Activated CD4-positive, alpha-beta T cell treated with anti-CD3 and anti-CD28 coated beads, Interleukin-2, amount 10 ng/mL, durations not matched to agents 24 days and 14 days (primary cell): ENCODE measurements at regions of chr3 and their contacts with region 1.

Region 1: DNA sequence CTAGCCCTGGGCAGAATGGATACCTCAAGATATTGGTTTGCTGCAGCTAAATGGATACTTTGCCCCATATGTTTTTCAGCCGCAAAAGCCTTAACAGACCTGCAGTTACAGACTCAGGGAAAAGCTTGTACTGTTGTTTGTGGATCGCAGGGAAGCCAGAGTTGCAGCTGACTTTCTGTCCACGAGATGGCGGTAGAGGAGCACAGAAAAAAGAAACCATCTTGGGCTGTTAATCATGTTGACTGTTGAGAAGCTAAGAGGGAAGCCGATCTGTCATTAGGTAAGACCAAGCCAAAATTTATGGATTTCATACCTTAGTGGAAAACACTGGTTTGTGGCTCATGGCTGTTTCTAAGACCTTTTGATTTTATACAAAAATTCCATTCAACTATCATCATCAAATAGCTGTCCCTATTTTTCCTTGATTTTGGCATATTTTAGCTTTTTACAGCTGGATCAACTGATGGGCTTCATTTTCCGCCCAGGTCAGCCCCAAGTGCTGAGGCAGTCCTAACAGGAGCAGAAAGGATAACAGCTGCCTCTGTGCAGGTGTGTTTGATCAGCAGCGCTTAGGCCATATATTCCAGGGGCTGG is 205.7 kb upstream of the ZPLD1 start:
- DNase-seq: peak; percentile 93
- H3K4me3 Mint-ChIP-seq: no peak overlapping the region
- H3K27ac Mint-ChIP-seq: no peak overlapping the region
- H3K4me1 Mint-ChIP-seq: peaks cover 10% of the 10 kb centered on the region
- H3K27me3 Mint-ChIP-seq: peaks cover 24% of the 10 kb centered on the region

Region 2: DNA sequence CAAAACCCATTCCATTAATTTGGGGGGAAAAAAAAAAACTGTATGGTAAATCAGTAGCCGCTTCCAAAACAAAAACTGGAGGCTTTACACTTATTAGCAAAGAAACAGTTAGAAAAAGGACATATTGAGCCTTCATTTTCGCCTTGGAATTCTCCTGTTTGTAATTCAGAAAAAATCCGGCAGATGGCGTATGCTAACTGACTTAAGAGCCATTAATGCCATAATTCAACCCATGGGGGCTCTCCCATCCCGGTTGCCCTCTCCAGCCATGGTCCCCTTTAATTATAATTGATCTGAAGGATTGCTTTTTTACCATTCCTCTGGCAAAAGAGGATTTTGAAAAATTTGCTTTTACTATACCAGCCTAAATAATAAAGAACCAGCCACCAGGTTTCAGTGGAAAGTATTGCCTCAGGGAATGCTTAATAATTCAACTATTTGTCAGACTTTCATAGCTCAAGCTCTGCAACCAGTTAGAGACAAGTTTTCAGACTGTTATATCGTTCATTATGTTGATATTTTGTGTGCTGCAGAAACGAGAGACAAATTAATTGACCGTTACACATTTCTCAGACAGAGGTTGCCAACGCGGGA is 533.3 kb before region 1 on chr3:
- intact Hi-C with region 1: loop called (anchors 5 kb)
- DNase-seq: peak; percentile 79
- H3K4me3 Mint-ChIP-seq: no peak overlapping the region
- H3K27ac Mint-ChIP-seq: no peak overlapping the region
- H3K4me1 Mint-ChIP-seq: peaks cover 3% of the 10 kb centered on the region
- H3K27me3 Mint-ChIP-seq: no peaks in the 10 kb centered on the region

Region 3: DNA sequence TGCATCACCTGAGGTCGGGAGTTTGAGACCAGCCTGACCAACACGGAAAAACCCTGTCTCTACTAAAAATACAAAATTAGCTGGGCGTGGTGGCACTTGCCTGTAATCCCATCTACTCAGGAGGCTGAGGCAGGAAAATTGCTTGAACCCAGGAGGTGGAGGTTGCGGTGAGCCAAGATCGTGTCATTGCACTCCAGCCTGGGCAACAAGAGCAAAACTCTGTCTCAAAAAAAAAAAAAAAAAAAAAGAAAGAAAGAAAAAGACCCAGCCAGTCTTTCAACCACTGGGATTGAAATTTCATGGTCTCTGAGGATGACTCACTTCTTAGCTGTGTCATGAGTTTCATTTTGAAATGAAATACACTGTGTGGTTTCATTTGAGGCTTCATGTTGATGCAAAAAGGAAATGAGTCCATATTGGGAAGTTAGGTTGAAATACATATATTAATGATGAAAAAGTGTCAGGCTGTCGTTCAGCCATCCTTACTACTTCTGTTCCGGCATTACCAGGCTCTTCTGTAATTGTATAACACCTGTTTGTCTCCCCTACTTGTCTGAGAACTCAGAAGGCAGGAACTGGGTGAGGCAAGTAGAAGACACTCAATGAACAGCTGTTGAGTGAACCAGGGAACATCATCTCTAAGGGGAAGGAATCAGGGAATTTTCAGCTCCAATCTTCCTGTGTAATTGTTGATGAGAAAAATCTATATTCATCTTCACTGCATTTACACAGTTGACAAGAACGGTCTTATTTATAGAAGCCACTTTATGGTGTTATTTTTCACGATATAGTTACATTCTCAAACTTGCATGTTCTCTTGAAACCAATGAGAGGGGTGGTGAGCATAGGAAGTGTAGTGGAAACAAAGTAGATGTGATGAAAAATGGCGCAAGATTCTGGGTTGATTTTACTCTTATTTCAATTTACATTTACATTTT is 292.5 kb before region 1 on chr3:
- intact Hi-C with region 1: loop called (anchors 5 kb)
- DNase-seq: peak; percentile 79
- H3K4me3 Mint-ChIP-seq: peak overlapping the region; percentile 55
- H3K27ac Mint-ChIP-seq: peak overlapping the region; percentile 73
- H3K4me1 Mint-ChIP-seq: peaks cover 27% of the 10 kb centered on the region
- H3K27me3 Mint-ChIP-seq: peaks cover 15% of the 10 kb centered on the region

Region 4: GRCh38 chr3:102129760-102130608 is 99.2 kb before region 1 on chr3:
- intact Hi-C with region 1: loop called (anchors 10 kb)
- DNase-seq: peak; percentile 57
- H3K4me3 Mint-ChIP-seq: no peak overlapping the region
- H3K27ac Mint-ChIP-seq: no peak overlapping the region
- H3K4me1 Mint-ChIP-seq: peaks cover 18% of the 10 kb centered on the region
- H3K27me3 Mint-ChIP-seq: no peaks in the 10 kb centered on the region

Region 5: GRCh38 chr3:102673271-102674115 is 444.3 kb after region 1 on chr3:
- intact Hi-C with region 1: loop called (anchors 2 kb)
- DNase-seq: peak; percentile 85
- H3K4me3 Mint-ChIP-seq: no peak overlapping the region
- H3K27ac Mint-ChIP-seq: no peak overlapping the region
- H3K4me1 Mint-ChIP-seq: peaks cover 2% of the 10 kb centered on the region
- H3K27me3 Mint-ChIP-seq: peaks cover 2% of the 10 kb centered on the region

Region 6: GRCh38 chr3:102715030-102715697 is 486.0 kb after region 1 on chr3:
- intact Hi-C with region 1: no loop called
- DNase-seq: no peak
- H3K4me3 Mint-ChIP-seq: no peak overlapping the region
- H3K27ac Mint-ChIP-seq: no peak overlapping the region
- H3K4me1 Mint-ChIP-seq: no peaks in the 10 kb centered on the region
- H3K27me3 Mint-ChIP-seq: peaks cover 5% of the 10 kb centered on the region